HEK293 (cell line): ENCODE measurements at regions of chr1 and their contacts with region 1.

Region 1: DNA sequence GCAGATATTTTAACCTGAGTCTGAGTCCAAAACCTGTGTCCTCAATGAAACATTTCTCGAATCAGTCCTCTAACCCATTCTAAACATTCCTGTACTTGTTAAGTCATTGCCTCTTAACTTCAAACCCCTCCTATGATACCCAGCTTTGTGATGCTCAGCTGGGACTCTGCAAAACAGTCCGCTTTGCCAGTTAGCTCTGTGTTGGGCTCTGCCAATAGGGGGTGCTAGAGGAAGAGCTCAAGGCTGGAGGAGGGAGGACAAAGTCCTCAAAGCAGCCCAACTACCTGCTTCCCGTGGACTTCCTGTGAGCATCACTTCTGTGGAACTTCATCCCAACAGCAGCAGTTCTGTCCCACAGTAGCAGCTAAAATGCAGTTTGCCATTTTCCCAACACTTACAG is 38.1 kb upstream of the SYT14 start:
- H3K4me3 ChIP-seq: no peak overlapping the region
- H3K27ac ChIP-seq: no peak overlapping the region
- H3K4me1 ChIP-seq: no peaks in the 10 kb centered on the region
- CTCF ChIP-seq: no peak

Region 2: GRCh38 chr1:209883341-209883971 is 16.5 kb before region 1 on chr1:
- CTCF ChIA-PET with region 1: interaction called, 12 read pairs
- POLR2A ChIA-PET with region 1: no interaction called
- H3K4me3 ChIP-seq: no peak overlapping the region
- H3K27ac ChIP-seq: 0 out of 2 replicates have a peak overlapping the region, but pooled peaks have one; percentile 5
- H3K4me1 ChIP-seq: peaks cover 3% of the 10 kb centered on the region
- CTCF ChIP-seq: no peak

Region 3: GRCh38 chr1:209912306-209912705 is 12.4 kb after region 1 on chr1:
- CTCF ChIA-PET with region 1: interaction called, 23 read pairs
- POLR2A ChIA-PET with region 1: interaction called, 4 read pairs
- H3K4me3 ChIP-seq: no peak overlapping the region
- H3K27ac ChIP-seq: no peak overlapping the region
- H3K4me1 ChIP-seq: no peaks in the 10 kb centered on the region
- CTCF ChIP-seq: no peak

Region 4: GRCh38 chr1:209920844-209921243 is 20.9 kb after region 1 on chr1:
- CTCF ChIA-PET with region 1: interaction called, 15 read pairs
- POLR2A ChIA-PET with region 1: no interaction called
- H3K4me3 ChIP-seq: no peak overlapping the region
- H3K27ac ChIP-seq: no peak overlapping the region
- H3K4me1 ChIP-seq: peaks cover 4% of the 10 kb centered on the region; the same call in 1 of the 2 replicates
- CTCF ChIP-seq: no peak

Region 5: GRCh38 chr1:210170220-210170619 is 270.3 kb after region 1 on chr1:
- CTCF ChIA-PET with region 1: no interaction called
- POLR2A ChIA-PET with region 1: no interaction called
- H3K4me3 ChIP-seq: no peak overlapping the region
- H3K27ac ChIP-seq: no peak overlapping the region
- H3K4me1 ChIP-seq: no peaks in the 10 kb centered on the region
- CTCF ChIP-seq: no peak